SK-N-SH (cell line): ENCODE measurements at regions of chr14 and their contacts with region 1.

Region 1: GRCh38 chr14:20613094-20614037 is 22.2 kb upstream of the RNASE12 start:
- DNase-seq: peak; percentile 66
- H3K4me3 ChIP-seq: peak overlapping the region; percentile 74 to 79
- H3K27ac ChIP-seq: peak overlapping the region; percentile 34 to 64; a peak in 3 of 4 replicates
- H3K4me1 ChIP-seq: no peaks in the 10 kb centered on the region; a peak in 2 of 4 replicates
- H3K27me3 ChIP-seq: no peaks in the 10 kb centered on the region
- CTCF ChIP-seq: peak; percentile 85
- EP300 ChIP-seq: peak in 1 of 2 experiments; percentile 21; a peak in 2 of 4 replicates
- RAD21 ChIP-seq: no peak

Region 2: GRCh38 chr14:20327005-20327869 is 286.1 kb before region 1 on chr14:
- CTCF ChIA-PET with region 1: interaction called, 70 read pairs
- POLR2A ChIA-PET with region 1: no interaction called
- DNase-seq: peak; percentile 55
- H3K4me3 ChIP-seq: no peak overlapping the region
- H3K27ac ChIP-seq: peak overlapping the region; percentile 17 to 55; a peak in 2 of 4 replicates
- H3K4me1 ChIP-seq: peaks cover 0 to 5% of the 10 kb centered on the region in 2 experiments; a peak in 2 of 4 replicates
- H3K27me3 ChIP-seq: no peaks in the 10 kb centered on the region
- CTCF ChIP-seq: peak; percentile 82
- EP300 ChIP-seq: no peak
- RAD21 ChIP-seq: peak; percentile 84

Region 3: GRCh38 chr14:20413045-20413799 is 200.1 kb before region 1 on chr14 and contains the start of gene TEP1:
- CTCF ChIA-PET with region 1: interaction called, 14 read pairs
- POLR2A ChIA-PET with region 1: no interaction called
- DNase-seq: peak; percentile 87
- H3K4me3 ChIP-seq: peak within 1 kb of the TSS; percentile 60 to 85
- H3K27ac ChIP-seq: peak within 1 kb of the TSS; percentile 92 to 95
- H3K4me1 ChIP-seq: peaks cover 0 to 17% of the 10 kb centered on the region in 2 experiments; a peak in 2 of 4 replicates
- H3K27me3 ChIP-seq: no peaks in the 10 kb centered on the region
- CTCF ChIP-seq: no peak
- EP300 ChIP-seq: no peak; a peak in 1 of 4 replicates
- RAD21 ChIP-seq: no peak
- polyA plus RNA-seq, gene TEP1: 12.1 and 13.3 TPM in 2 replicates

Region 4: DNA sequence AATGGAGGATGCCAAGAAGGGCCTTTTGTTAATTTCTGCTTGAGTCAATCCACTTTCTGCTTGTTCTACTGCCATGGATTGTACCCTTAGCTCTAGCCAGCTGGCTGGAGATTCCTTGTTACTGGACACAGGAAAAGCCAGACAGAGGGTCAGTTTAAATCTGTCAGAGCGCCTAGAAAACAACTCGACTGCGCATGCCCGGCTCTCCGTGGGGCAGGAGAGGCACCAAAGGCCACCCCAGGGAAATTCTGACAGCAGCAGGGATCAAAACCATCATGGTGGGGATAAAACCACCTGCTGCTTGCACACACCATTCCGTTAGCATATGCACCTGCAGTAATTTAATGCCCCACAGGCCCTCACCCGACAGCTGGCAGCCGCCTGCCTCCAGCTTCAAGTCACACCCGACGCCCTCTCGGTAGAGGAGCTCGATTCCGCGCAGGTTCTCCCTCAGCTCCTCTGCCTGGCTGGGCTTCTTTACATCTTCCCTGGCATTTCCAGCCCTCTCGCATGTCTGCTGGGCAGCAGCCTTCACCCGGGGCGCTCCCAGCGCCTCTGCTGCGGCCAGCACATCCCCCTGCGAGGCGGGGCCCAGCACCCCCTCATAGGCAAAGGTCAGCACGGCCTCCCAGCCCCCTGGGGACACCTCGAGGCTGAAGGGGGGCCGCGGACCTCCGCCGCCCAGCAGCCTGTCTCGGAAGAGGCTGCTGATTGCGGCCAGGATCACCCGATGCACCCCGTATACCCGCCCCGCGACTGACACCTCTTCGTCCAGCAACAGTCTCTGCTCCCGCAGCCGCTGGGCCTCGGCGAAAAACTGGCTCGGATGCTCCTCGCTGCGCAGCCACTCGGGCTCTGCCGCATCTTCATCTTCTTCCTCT is 178.4 kb before region 1 on chr14:
- CTCF ChIA-PET with region 1: no interaction called
- POLR2A ChIA-PET with region 1: no interaction called
- DNase-seq: no peak
- H3K4me3 ChIP-seq: no peak overlapping the region
- H3K27ac ChIP-seq: no peak overlapping the region
- H3K4me1 ChIP-seq: peaks cover 0 to 2% of the 10 kb centered on the region in 2 experiments; a peak in 1 of 4 replicates
- H3K27me3 ChIP-seq: no peaks in the 10 kb centered on the region; the same call in 1 of the 2 replicates
- CTCF ChIP-seq: no peak
- EP300 ChIP-seq: no peak
- RAD21 ChIP-seq: no peak

Region 5: DNA sequence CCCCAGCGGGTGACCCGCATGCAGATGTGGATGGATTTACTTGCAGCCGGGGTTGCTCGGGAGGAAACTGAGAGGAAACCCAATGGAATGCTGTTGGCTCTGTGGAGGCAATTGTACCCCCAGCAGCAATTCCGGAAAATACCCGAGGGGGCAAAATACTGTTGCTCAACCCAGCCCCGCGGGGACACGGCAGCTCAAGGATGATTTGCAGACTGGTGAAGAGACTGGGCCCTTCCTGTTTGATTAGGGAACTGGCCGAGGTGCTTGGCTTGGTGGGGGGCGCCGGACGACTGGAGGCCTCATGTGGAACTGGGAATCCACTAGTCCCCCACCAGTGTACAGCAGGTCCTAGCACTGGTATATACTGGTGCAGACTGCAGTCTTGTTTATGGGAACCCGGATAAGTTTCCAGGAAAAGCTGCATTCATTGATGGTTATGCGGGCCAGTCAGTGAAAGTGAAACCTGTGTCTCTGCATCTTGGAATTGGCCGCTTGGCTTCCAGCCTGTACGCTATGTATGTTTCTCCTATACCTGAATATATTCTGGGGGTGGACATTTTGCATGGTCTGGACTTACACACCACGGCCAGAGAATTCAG is 11.8 kb before region 1 on chr14:
- CTCF ChIA-PET with region 1: interaction called, 25 read pairs
- POLR2A ChIA-PET with region 1: no interaction called
- DNase-seq: no peak
- H3K4me3 ChIP-seq: peak overlapping the region in 1 of 2 experiments; percentile 9; a peak in 1 of 4 replicates
- H3K27ac ChIP-seq: no peak overlapping the region
- H3K4me1 ChIP-seq: peaks cover 0 to 4% of the 10 kb centered on the region in 2 experiments; a peak in 1 of 4 replicates
- H3K27me3 ChIP-seq: peaks cover 37% of the 10 kb centered on the region
- CTCF ChIP-seq: no peak
- EP300 ChIP-seq: no peak
- RAD21 ChIP-seq: no peak

Region 6: GRCh38 chr14:20682435-20683124 is 69.2 kb after region 1 on chr14:
- CTCF ChIA-PET with region 1: interaction called, 25 read pairs
- POLR2A ChIA-PET with region 1: no interaction called
- DNase-seq: peak; percentile 85
- H3K4me3 ChIP-seq: peak overlapping the region; percentile 93 to 97
- H3K27ac ChIP-seq: peak overlapping the region; percentile 94 to 98
- H3K4me1 ChIP-seq: peaks cover 5 to 26% of the 10 kb centered on the region in 2 experiments; a peak in 3 of 4 replicates
- H3K27me3 ChIP-seq: peaks cover 2% of the 10 kb centered on the region; the same call in 1 of the 2 replicates
- CTCF ChIP-seq: no peak; the same call in 1 of the 2 replicates
- EP300 ChIP-seq: no peak
- RAD21 ChIP-seq: no peak

Region 7: DNA sequence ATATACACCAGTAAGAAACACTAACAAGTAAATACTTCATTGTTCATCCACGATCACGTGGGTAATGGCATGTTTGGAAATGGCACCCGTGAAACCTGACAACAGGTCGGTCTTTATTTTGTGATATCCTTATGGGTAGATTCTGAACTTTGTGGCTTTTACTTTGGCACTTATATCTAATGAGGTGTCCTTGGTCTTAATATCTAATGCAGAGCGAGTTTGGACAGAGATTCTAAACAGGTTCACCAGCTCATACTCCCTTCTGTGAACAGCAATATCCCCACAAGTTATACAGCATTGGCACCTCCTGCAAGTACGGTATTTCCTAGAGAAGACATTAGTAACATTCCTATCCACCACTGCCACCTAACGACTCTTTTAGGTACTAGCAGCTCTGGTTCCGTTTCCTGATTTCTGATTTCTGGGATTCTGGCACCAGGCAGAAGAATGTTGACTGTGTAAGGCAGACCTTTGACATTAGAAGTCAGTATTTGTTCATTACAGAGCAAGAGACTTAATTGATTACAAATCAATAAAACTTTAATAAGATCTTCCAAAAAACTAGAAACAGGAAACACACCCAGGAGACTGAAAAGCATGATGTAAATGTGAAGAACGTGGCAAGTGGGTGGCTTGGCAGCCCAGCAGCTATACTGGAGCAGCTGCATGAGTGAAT is 77.6 kb after region 1 on chr14:
- CTCF ChIA-PET with region 1: interaction called, 24 read pairs
- POLR2A ChIA-PET with region 1: interaction called, 3 read pairs
- DNase-seq: peak; percentile 73
- H3K4me3 ChIP-seq: peak overlapping the region; percentile 6 to 7; a peak in 2 of 4 replicates
- H3K27ac ChIP-seq: no peak overlapping the region
- H3K4me1 ChIP-seq: no peaks in the 10 kb centered on the region
- H3K27me3 ChIP-seq: no peaks in the 10 kb centered on the region
- CTCF ChIP-seq: peak; percentile 81
- EP300 ChIP-seq: no peak
- RAD21 ChIP-seq: peak; percentile 84